ENCODE measurements at regions of chr2 and their contacts with region 1.

Region 1: GRCh38 chr2:27133905-27134780 is at the start of gene PREB:
- DNase-seq: peak; percentile 99
- total RNA-seq, gene PREB: 90.7 to 92.3 TPM

Region 2: DNA sequence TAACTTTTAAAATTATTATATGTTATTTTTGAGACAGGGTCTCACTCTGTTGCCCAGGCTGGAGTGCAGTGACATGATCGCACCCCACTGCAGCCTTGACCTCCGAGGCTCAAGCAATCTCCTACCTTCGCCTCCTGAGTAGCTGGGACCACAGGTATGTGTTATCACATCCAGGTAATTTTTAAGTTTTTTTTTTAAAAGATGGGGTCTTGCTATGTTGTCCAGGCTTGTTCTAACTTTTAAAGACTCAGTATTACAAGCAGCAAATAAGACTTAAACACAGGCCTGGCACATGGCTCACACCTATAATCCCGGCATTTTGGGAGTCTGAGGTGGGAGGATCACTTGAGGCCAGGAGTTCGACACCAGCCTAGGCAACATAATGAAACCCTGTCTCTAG is 1357.1 kb before region 1 on chr2:
- intact Hi-C with region 1: no loop called
- DNase-seq: no peak

Region 3: DNA sequence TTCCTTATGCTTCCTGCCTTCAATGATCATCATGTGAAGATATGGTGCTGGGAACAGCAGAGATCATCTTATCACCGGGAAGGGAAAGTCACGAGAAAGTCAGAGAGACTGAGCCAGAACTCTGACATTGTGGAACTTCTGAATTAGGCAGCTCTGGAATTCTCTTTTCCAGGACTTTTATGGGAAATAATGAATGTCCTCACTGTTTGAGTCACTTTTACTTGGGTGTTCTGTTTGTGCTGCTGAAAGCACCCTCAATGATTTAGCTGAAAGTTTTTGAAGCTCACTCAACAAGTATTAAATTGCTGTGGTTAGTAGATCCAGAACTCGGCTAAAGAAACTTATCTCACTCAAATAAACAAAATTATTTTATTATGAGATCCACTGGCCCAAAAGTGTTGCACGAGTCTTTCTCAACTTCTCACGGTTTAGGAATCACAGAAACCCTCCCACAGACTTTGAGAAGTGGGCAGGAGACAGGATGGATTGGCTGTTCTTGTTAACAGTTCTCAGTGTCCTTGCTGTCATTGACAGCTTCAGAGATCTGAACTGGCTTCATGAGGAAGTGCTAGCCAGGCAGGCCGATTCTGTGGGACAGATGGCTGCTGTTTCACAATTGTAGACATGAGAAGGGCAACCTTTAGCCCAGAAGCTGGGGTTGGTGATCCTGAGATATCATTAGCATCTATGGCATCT is 51.3 kb after region 1 on chr2:
- intact Hi-C with region 1: loop called (anchors 1 to 5 kb)
- DNase-seq: no peak

Region 4: GRCh38 chr2:27261926-27262298 is 127.8 kb after region 1 on chr2:
- intact Hi-C with region 1: loop called in 1 of 2 experiments (anchors 1 kb)
- DNase-seq: peak; percentile 59